HCT116 (cell line): ENCODE measurements at regions of chr5 and their contacts with region 1.

Region 1: GRCh38 chr5:113612060-113612496 is 98.6 kb downstream of the YTHDC2 start:
- DNase-seq: peak; percentile 13
- ATAC-seq: peak; percentile 82
- H3K4me3 ChIP-seq: no peak overlapping the region
- H3K27ac ChIP-seq: no peak overlapping the region
- H3K4me1 ChIP-seq: peaks cover 0 to 5% of the 10 kb centered on the region in 2 experiments; a peak in 1 of 4 replicates
- H3K27me3 ChIP-seq: no peaks in the 10 kb centered on the region
- CTCF ChIP-seq: peak; percentile 22 to 73 (median 54); a peak in 4 of 6 replicates
- POLR2A ChIP-seq: no peak
- RAD21 ChIP-seq: peak; percentile 78

Region 2: GRCh38 chr5:113378959-113379541 is 233.0 kb before region 1 on chr5:
- CTCF ChIA-PET with region 1: no interaction called
- POLR2A ChIA-PET with region 1: no interaction called
- RAD21 ChIA-PET with region 1: no interaction called
- intact Hi-C with region 1: no loop called
- DNase-seq: peak; percentile 50
- ATAC-seq: peak; percentile 81
- H3K4me3 ChIP-seq: no peak overlapping the region
- H3K27ac ChIP-seq: no peak overlapping the region
- H3K4me1 ChIP-seq: no peaks in the 10 kb centered on the region
- H3K27me3 ChIP-seq: no peaks in the 10 kb centered on the region
- CTCF ChIP-seq: peak; percentile 63 to 80 (median 75)
- POLR2A ChIP-seq: no peak
- RAD21 ChIP-seq: peak; percentile 80

Region 3: GRCh38 chr5:113598926-113599325 is 13.2 kb before region 1 on chr5:
- CTCF ChIA-PET with region 1: interaction called, 11 read pairs
- POLR2A ChIA-PET with region 1: no interaction called
- RAD21 ChIA-PET with region 1: no interaction called
- intact Hi-C with region 1: no loop called
- DNase-seq: no peak
- ATAC-seq: no peak
- H3K4me3 ChIP-seq: no peak overlapping the region
- H3K27ac ChIP-seq: no peak overlapping the region
- H3K4me1 ChIP-seq: no peaks in the 10 kb centered on the region
- H3K27me3 ChIP-seq: no peaks in the 10 kb centered on the region
- CTCF ChIP-seq: no peak
- POLR2A ChIP-seq: no peak
- RAD21 ChIP-seq: no peak

Region 4: DNA sequence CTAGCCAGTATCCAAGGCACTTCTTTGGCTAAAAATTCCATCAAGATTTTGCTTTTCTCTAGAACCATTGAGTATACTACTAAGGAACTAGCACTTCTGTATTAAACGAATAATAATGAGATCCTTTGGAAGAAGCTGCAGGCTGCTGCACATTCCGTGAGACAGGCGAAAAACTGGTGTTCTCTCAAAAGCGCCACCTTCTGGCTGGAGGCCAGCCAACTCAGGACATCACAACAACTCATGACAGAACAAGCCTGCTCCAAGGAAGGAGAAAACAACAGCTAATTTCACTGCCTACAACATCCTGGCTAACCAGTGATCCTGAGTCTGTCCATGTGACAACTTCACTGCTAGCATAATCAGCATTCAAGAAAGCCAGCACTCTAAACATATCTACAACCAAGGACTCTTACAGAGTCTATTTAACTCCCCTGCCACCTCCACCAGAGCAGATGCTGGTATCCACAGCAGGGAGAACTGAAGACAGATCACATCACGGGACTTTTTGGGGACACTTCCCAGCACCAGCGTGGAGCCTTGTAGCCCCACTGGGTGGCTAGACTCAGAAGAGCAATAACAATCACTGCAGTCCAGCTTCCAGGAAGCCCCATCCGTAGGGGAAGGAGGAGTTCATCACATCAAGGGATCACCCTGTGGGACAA is 51.9 kb after region 1 on chr5:
- CTCF ChIA-PET with region 1: interaction called, 14 read pairs
- POLR2A ChIA-PET with region 1: no interaction called
- RAD21 ChIA-PET with region 1: interaction called in 1 of 2 experiments, 3 read pairs
- intact Hi-C with region 1: loop called (anchors 2 kb)
- DNase-seq: peak; percentile 51
- ATAC-seq: peak; percentile 93
- H3K4me3 ChIP-seq: no peak overlapping the region
- H3K27ac ChIP-seq: no peak overlapping the region
- H3K4me1 ChIP-seq: no peaks in the 10 kb centered on the region
- H3K27me3 ChIP-seq: no peaks in the 10 kb centered on the region
- CTCF ChIP-seq: peak; percentile 10 to 69 (median 57); a peak in 4 of 6 replicates
- POLR2A ChIP-seq: no peak
- RAD21 ChIP-seq: peak; percentile 37